ENCODE measurements at regions of chr9 and their contacts with region 1.

Region 1: GRCh38 chr9:135639196-135639595 is at the start of gene GLT6D1:
- DNase-seq: no peak
- H3K4me3 ChIP-seq: no peak within 1 kb of the TSS
- H3K27ac ChIP-seq: no peak within 1 kb of the TSS
- H3K4me1 ChIP-seq: no peaks in the 10 kb centered on the region
- H3K27me3 ChIP-seq: peaks cover 34% of the 10 kb centered on the region
- CTCF ChIP-seq: no peak
- EP300 ChIP-seq: no peak
- POLR2A ChIP-seq: no peak
- total RNA-seq, gene GLT6D1: not detected

Region 2: DNA sequence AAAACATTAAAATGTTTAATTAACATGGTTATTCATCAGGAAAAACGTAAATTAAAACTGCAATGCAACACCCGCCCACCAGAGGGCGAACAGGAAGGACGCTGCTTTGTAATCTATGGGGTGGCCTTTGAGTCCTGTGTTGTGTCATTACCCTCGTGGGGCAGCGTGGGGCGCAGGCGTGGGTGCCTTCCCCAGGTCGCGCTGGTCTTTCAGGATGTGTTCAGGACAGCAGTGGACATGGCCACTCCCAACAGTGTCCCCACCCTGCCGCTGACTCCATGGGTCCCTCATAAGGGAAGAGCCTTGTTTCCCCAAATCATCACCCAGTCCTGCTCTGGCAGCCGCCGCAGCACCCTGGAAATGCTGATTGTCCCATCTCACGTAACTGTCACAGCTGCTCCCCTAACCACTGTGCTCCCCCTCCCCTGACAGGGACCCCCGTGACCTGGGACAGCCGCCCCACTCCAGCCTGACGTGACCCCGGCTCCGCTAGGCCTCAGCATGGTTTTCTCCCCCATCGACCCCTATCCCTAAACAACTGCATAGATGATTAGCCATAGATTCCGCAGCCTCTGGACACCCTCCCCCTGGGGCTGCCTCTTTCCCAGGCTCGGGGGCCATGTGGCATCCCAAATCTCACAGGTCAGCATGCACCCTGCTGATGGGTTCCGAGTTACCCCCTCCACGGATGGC is 36.3 kb before region 1 on chr9:
- in situ Hi-C with region 1: no loop called
- intact Hi-C with region 1: loop called (anchors 1 kb)
- DNase-seq: peak; percentile 47
- H3K4me3 ChIP-seq: no peak overlapping the region
- H3K27ac ChIP-seq: no peak overlapping the region
- H3K4me1 ChIP-seq: no peaks in the 10 kb centered on the region
- H3K27me3 ChIP-seq: peaks cover 13% of the 10 kb centered on the region
- CTCF ChIP-seq: peak; percentile 56 to 84 (median 66)
- EP300 ChIP-seq: no peak
- POLR2A ChIP-seq: no peak

Measured in transverse colon (tissue), 4 donors.